ENCODE measurements at regions of chr2 and their contacts with region 1.

Region 1: GRCh38 chr2:126244937-126245336 is 411.0 kb upstream of the GYPC start:
- DNase-seq: peak; percentile 77
- ATAC-seq: peak; percentile 45
- H3K4me3 Mint-ChIP-seq: no peak overlapping the region
- H3K27ac Mint-ChIP-seq: no peak overlapping the region
- H3K4me1 Mint-ChIP-seq: no peaks in the 10 kb centered on the region
- H3K27me3 Mint-ChIP-seq: no peaks in the 10 kb centered on the region
- CTCF ChIP-seq: peak; percentile 34

Region 2: DNA sequence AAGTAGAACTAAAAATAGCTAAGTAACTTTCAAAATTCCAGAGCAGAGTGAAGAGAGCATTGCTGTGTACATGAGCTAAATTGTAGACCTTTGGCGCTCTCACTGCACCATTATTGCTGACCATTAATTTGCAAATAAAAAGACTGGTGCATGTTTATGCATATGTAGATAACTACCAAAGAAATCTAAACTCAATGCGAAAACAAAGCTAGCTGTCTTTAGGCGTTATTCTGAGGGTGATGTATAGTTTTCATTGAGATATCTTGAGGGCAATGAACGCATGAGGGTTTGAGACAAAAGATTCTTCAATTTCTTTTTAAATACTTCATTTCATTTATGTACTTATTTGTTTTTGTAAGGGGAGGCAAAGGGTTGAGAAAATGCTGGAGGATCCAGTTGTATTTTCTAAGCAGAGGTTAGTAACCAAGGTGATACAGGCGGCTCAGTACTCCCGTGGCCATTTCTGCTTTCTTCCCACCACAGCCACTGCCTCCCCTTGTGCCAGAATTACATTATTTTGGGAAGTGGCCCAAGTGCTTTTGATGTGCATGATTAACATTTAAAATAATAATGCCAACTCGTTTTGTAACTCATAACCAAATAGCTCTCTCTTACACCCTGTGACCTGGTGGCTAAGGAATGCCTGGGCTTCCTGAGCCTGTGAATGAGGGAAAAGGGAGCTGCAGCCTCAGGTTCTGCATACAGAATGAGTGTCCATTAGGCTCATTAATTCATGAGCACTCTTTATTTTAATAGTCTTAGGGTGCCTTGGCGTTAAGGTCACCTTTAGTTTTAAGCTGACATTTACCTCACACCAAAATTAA is 386.8 kb before region 1 on chr2:
- CTCF ChIA-PET with region 1: no interaction called
- POLR2A ChIA-PET with region 1: no interaction called
- intact Hi-C with region 1: no loop called
- DNase-seq: no peak
- ATAC-seq: no peak
- H3K4me3 Mint-ChIP-seq: no peak overlapping the region
- H3K27ac Mint-ChIP-seq: no peak overlapping the region
- H3K4me1 Mint-ChIP-seq: no peaks in the 10 kb centered on the region
- H3K27me3 Mint-ChIP-seq: no peaks in the 10 kb centered on the region
- CTCF ChIP-seq: no peak

Region 3: GRCh38 chr2:126172785-126173184 is 72.2 kb before region 1 on chr2:
- CTCF ChIA-PET with region 1: no interaction called
- POLR2A ChIA-PET with region 1: no interaction called
- intact Hi-C with region 1: no loop called
- DNase-seq: no peak
- ATAC-seq: no peak
- H3K4me3 Mint-ChIP-seq: no peak overlapping the region
- H3K27ac Mint-ChIP-seq: no peak overlapping the region
- H3K4me1 Mint-ChIP-seq: no peaks in the 10 kb centered on the region
- H3K27me3 Mint-ChIP-seq: no peaks in the 10 kb centered on the region
- CTCF ChIP-seq: no peak

Region 4: DNA sequence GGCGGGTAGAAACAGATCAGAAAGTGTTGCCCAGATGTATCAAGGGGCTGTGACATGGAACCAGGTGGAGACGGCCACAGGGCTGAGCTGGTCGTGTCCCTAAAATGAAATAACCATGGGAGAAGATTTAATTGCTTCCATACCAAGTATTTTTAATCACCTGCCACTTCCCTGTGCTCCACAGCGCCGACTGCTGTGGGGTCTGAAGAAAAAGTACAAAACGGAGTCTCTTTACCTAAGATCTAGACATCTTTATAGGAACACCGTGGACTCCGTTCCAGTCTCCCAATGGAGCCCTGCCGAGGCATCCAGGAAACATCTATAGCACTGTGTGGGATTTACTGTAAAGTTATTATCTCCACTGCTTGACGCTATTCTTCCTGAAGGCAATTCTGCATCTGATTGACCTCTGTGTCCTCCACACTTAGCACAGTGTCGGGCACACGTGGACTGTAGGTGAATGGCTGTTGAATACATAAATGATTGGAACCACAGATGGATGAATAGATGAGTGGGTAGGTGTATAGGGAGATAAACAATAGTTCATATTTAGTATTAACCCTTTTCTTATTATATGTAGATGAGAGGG is 389.4 kb after region 1 on chr2:
- CTCF ChIA-PET with region 1: no interaction called
- POLR2A ChIA-PET with region 1: no interaction called
- intact Hi-C with region 1: loop called (anchors 10 kb)
- DNase-seq: peak; percentile 44
- ATAC-seq: no peak
- H3K4me3 Mint-ChIP-seq: no peak overlapping the region
- H3K27ac Mint-ChIP-seq: no peak overlapping the region
- H3K4me1 Mint-ChIP-seq: no peaks in the 10 kb centered on the region
- H3K27me3 Mint-ChIP-seq: no peaks in the 10 kb centered on the region
- CTCF ChIP-seq: peak; percentile 71

Measured in activated CD8-positive, alpha-beta T cell treated with anti-CD3 and anti-CD28 coated beads for 36 hours (primary cell).